Head of caudate nucleus (tissue), 42 donors: ENCODE measurements at regions of chr12 and their contacts with region 1.

Region 1: DNA sequence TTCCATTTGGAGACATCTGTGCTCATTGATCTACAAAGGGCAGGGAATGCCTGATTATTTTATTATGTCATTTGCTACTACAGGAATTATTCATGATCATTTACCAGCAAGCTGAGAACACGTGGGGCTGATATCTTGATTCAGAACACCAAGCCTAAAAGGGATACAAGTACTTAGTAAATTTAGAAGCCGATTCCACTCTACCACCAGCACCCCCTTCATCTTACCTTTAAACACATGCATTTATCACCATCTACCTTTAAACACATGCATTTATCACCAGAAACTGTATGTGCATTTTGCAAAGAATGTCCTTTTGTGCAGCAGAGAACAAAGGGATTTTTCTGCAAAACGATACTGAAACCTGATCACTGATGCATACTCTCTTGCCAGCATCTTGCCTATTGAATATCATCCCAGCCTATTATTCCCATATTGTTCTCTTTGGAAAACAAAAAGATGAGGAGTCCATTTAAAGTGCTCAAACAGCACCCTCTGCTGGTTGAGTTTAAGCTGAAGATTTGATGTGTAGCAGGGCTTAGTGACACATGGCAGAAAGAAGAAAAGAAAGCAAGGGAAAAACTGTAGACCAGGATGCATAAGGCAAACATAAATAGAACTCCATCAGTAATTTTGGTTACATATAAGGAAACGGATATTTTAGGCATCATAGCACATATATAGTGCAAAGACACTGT is 132.6 kb upstream of the PLEKHG7 start:
- DNase-seq: peak in 36 of 42 donors; percentile 14 to 92 (median 69)

Region 2: DNA sequence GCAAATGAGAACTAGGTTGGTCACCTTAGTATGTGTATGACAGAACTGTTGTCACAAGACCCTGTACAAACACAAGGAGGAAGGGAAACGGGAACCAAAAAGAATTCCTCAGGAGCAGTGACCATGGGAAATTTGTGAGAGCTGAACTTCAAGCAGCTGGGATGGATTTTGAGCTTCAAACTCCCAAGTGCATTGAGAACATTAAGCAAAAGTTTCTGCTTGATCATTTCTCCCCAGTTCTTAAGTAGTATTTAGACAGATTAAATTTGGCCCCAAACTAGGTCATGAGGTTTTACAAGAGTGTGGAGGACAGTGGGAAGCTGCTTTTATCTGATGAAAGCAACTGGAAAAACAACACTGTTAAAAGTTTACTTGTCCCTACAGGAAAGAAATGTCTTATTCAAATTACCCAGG is 1181.6 kb before region 1 on chr12:
- intact Hi-C with region 1: loop called (anchors 5 kb)
- DNase-seq: no peak

Region 3: GRCh38 chr12:92505254-92506231 is 64.7 kb before region 1 on chr12:
- intact Hi-C with region 1: loop called (anchors 10 kb)
- DNase-seq: peak in 39 of 42 donors; percentile 12 to 75 (median 47)